BJ (cell line): ENCODE measurements at regions of chr7 and their contacts with region 1.

Region 1: DNA sequence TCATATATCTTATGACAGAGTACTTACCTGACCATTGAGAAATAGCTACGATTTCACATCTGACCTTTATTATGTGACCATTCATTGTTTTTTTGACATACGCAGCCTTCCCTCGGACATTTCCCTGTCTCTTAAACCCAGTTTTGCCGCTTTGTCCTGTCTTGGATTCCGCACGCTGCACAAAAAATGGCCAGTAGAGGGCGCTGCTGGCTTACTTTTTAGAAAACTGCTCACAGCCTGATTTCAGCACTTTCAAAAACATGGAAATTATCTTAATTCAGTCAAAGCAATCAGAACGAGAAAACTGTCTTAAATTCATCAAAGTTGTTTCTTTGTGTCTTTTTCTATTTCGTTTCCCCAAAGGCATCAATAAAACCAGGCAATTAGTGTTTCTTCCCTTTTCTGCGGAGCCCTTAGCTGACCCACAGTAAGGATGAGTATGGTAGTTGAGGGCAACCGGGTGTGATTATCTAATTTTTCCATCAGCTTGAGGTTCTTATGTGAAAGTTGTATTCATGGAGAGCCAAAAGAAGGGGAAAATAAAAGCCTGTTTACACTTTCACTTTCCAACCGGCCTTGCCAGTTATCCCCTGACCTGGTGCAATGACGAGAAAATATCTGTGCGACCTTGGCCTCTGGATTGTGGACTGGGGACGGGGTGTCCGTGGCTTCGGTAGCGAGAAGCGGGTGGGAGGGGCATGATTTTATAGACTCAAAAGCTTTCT is 144.4 kb downstream of the DYNC1I1 start:
- DNase-seq: no peak
- H3K4me3 ChIP-seq: no peak overlapping the region
- H3K27me3 ChIP-seq: 0 out of 2 replicates have a peak, but pooled peaks cover 2% of the 10 kb centered on the region
- CTCF ChIP-seq: peak; percentile 88

Region 2: GRCh38 chr7:95905165-95905564 is 11.6 kb before region 1 on chr7:
- CTCF ChIA-PET with region 1: interaction called, 17 read pairs
- POLR2A ChIA-PET with region 1: no interaction called
- DNase-seq: no peak
- H3K4me3 ChIP-seq: no peak overlapping the region
- H3K27me3 ChIP-seq: no peaks in the 10 kb centered on the region
- CTCF ChIP-seq: no peak

Region 3: DNA sequence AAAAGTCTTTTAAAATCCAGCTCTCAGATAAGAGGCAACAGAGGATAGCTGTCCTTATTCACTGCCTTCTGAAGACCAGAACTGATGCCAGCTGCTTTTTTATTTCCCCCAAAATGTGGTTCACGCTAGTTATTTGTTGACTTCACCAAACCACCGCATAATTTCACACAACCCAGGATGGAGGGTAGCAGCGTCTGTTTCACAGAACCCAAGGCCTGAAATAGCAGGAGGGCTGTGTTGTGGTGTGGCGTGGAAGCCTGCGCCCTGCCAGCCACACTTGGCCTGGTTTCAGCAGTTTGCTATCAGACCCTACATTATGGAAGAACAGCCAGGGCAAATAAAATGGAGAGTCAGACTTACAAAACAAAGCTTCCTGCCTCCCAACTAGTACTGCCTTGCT is 11.0 kb after region 1 on chr7:
- CTCF ChIA-PET with region 1: interaction called, 22 read pairs
- POLR2A ChIA-PET with region 1: no interaction called
- DNase-seq: no peak
- H3K4me3 ChIP-seq: no peak overlapping the region
- H3K27me3 ChIP-seq: no peaks in the 10 kb centered on the region
- CTCF ChIP-seq: no peak

Region 4: GRCh38 chr7:97027427-97028234 is 1110.9 kb after region 1 on chr7:
- CTCF ChIA-PET with region 1: interaction called, 57 read pairs
- POLR2A ChIA-PET with region 1: no interaction called
- DNase-seq: peak; percentile 37
- H3K4me3 ChIP-seq: peak overlapping the region; percentile 12; the same call in 1 of the 2 replicates
- H3K27me3 ChIP-seq: peaks cover 31% of the 10 kb centered on the region
- CTCF ChIP-seq: peak; percentile 87

Region 5: DNA sequence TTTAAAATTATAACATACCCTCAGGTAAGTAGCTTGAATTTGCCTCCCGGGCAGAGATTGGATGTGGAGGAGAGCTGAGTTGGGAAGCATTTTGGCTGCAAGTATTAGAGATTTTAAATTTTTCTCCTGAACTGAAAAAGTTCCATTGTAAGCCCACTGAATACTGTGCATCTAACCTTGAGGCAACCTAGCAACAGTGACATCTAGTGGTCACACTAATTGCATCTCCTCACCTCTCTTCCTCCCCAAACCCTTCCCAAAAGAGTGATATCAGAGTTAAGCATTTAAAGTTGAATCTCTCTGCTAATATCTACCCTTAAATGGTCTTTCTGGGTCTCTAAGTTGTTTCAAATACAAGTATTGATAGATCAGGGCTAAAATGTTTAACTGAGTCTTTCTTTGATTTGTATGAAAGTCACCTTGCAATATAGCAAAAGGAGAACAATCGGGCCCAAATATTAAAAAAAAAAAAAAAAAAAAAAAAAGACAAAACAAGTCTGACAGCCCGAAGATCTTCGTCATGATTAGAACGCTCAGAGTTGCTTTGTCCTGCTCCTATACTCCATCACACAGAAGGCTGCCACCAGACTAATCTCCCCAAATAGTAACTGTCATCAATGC is 1148.3 kb after region 1 on chr7:
- CTCF ChIA-PET with region 1: interaction called, 23 read pairs
- POLR2A ChIA-PET with region 1: no interaction called
- DNase-seq: no peak
- H3K4me3 ChIP-seq: no peak overlapping the region
- H3K27me3 ChIP-seq: no peaks in the 10 kb centered on the region
- CTCF ChIP-seq: peak; percentile 74